Dorsolateral prefrontal cortex (tissue), 120 donors: ENCODE measurements at regions of chr11 and their contacts with region 1.

Region 1: GRCh38 chr11:121451986-121452608 is at the start of gene SORL1:
- DNase-seq: peak; percentile 70 to 87 (median 76)
- H3K4me3 ChIP-seq: peak within 1 kb of the TSS; percentile 49 to 96 (median 84)
- H3K27ac ChIP-seq: peak within 1 kb of the TSS in 58 of 59 donors; percentile 44 to 98 (median 90)
- H3K27me3 ChIP-seq: no peaks in the 10 kb centered on the region
- CTCF ChIP-seq: peak in 53 of 56 donors; percentile 16 to 75 (median 54)
- total RNA-seq, gene SORL1: 181 to 321 (median 250) TPM

Region 2: GRCh38 chr11:121352251-121352891 is 99.7 kb before region 1 on chr11:
- intact Hi-C with region 1: loop called in 1 of 2 experiments (anchors 10 kb)
- DNase-seq: peak; percentile 30 to 83 (median 74)
- H3K4me3 ChIP-seq: peak overlapping the region in 3 of 59 donors; percentile 0 to 28 (median 9)
- H3K27ac ChIP-seq: peak overlapping the region in 56 of 59 donors; percentile 9 to 88 (median 70)
- H3K27me3 ChIP-seq: no peaks in the 10 kb centered on the region
- CTCF ChIP-seq: peak in 3 of 56 donors; percentile 8 to 31 (median 9)

Region 3: GRCh38 chr11:121466063-121466794 is 14.1 kb after region 1 on chr11:
- intact Hi-C with region 1: loop called in 1 of 2 experiments (anchors 1 kb)
- DNase-seq: peak; percentile 71 to 95 (median 87)
- H3K4me3 ChIP-seq: peak overlapping the region in 21 of 59 donors; percentile 0 to 47 (median 17)
- H3K27ac ChIP-seq: peak overlapping the region; percentile 0 to 95 (median 84)
- H3K27me3 ChIP-seq: no peaks in the 10 kb centered on the region
- CTCF ChIP-seq: no peak

Region 4: DNA sequence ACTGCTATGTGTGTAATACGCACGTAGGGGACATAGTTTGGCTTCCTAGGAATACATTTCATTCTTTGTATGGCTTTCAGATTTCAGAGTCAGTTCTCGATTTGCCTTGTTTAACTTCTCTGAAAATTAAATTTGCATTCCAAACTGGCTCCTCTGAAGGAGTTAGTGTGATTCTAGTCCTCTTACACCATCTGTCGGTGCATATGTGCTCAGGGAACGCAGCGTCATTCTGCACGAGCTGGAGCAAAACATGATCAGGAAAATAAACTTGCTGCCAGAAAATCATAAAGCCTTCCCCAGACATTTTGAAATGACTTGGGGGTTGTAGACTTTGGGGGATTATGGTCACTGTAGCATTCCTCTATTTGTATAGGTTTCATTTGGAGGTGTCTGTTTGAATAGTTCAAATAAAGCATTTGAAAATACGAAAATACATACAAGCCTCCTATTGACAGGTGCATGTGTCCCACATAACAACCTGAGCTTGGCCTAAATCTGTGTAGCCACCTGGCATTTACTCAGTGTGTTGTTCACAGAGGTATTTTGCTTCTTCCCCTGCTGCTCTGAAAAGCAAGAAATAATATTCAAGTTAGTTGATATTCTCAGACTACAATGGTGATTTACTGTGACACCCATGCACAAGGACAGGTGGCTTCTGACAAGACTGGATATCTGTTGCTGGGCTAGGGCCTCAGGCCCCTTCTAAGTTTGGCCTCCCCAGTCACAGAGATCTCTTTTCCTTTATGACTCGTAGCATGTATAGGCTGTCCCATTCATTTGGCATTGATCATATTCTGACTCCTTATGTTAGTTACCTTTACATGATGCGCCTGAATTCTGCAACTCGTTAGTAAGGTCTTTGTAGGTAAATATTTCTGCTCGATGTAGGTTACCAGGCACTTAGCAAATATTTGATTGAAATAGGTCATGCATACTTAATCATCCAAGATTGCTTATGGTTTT is 82.3 kb after region 1 on chr11:
- intact Hi-C with region 1: loop called (anchors 2 to 5 kb)
- DNase-seq: peak in 7 of 10 donors; percentile 41 to 76 (median 66)
- H3K4me3 ChIP-seq: peak overlapping the region in 11 of 59 donors; percentile 0 to 35 (median 19)
- H3K27ac ChIP-seq: peak overlapping the region in 49 of 59 donors; percentile 1 to 94 (median 54)
- H3K27me3 ChIP-seq: no peaks in the 10 kb centered on the region
- CTCF ChIP-seq: peak in 55 of 56 donors; percentile 41 to 84 (median 64)